Cardiac septum (tissue), 1 donor: ENCODE measurements at regions of chr17 and their contacts with region 1.

Region 1: GRCh38 chr17:2592971-2593820 is at the start of gene PAFAH1B1:
- DNase-seq: peak; percentile 97
- total RNA-seq, gene PAFAH1B1: 142 TPM

Region 2: DNA sequence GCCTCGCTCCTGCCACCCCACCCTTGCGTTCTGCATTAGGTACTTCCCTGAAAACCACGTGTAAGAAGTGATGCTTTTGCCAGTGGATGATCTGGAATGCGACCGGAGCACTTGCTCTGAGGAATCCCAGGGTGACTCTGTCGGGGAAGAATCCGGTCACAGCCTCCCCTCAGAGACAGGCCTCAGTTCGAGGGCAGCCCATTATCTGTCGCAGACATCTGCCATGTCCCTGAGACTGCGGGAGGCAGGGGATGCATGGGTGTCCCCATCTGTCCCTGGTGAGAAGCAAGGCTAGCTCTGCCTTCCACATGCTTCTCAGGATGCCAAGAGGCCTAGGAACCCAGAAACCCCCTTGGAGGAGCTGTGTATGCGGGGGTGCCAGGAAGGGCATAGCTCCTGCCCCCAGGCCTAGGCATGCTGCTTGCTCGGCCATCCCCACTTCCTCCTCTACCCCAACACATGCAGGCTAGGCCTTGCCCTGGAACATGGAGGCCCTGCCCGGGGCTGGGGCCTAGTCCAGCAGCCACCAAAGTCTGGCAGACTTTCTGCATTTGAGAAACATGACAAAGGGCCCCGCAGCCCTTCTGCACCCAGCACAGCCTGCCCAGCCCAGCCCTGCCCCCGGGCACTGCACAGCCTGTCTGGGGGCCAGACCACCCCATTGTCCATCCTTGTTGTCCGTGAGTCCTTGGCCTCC is 212.8 kb before region 1 on chr17:
- intact Hi-C with region 1: no loop called
- DNase-seq: no peak

Region 3: GRCh38 chr17:2392252-2393173 is 200.7 kb before region 1 on chr17:
- intact Hi-C with region 1: loop called (anchors 5 kb)
- DNase-seq: peak; percentile 98

Region 4: DNA sequence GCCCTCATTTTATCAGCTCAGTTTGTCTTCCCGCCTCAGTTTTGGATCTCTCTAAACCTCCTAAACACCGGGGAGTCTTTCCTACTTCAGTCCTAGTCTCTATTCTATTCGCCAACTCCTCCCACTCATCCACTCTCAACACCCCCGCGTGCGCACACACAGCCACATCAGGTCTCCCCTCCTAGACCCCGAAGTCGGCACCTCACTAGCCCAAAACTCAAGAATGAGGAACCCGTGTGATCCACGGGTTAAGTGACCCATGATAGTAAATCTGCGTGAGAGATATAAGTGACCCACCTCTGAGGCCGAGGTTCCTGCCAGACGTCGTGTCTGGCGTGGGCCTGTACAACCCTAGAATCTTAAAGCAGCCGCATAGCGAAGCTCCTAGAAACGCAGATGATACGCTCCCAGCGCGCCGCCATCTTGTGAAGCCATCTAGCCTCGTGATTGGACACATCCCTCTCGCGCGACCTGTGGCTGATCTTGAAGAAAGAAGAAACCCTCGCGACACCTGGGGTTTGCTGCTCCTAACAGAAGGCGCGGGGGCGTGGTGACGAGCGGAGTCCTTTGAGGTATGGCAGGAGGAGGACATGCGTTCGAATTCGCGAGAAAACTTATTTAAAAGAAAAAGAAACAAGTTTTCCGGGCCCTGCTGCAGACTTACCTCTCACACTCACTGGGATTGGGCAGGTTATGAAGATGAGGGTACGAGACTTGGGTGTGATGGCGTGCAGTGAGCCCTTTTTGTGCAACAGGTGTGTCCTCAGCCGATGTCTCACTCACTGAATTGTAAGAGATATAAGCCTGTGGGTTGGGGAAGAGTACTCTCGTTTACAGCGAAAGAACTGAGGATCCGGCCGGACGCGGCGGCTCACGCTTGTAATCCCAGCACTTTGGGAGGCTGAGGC is 81.5 kb before region 1 on chr17 and contains the start of gene METTL16:
- intact Hi-C with region 1: loop called (anchors 5 kb)
- DNase-seq: peak; percentile 98
- total RNA-seq, gene METTL16: 25.8 TPM

Region 5: DNA sequence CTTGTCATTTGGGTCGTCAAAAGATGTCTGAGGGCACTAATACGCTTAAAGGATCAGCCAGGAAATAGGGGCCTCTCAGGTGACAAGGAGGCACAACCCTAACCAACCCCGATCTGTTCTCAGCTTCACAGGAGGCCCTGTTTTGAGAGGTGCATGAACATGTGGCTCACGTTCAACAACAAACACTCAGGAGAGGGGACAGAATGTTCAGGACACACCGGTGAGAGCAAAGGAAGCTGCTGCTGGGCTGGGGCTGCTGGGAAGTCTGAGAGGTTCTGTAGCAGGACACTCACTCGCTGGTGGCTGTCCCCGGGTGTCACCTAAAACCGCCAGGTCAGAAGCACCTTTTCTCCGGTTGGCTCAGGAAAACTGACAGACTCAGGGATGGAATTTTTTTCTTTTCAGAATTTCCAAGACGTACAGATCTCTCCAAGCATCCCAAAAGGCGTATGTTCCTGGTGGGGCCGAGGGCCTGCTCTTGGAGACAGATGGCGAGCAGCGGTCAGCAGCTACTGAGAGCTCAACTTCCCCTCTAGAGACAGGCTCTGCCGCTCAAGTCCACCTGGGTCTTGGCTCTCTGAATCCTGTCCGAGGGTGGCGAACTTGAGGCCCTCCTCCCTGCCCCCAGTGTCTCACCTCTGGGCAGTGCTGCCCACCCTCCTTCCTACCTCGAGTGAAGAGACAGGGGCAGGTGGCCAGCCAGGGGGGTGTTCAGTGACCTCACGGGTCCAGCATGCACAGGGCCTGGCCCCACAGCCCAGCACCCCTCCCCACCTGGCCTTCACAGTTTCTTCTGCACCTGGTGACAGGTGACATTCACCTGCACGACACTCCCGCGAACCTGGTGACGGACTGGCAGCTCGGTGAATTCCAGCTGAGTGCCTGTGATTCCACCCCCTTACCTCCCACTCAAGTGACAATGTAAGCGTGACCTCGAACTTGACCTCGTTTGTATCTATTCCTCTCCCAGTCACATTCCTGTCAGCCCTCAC is 95.5 kb after region 1 on chr17:
- intact Hi-C with region 1: loop called (anchors 5 kb)
- DNase-seq: peak; percentile 62

Region 6: DNA sequence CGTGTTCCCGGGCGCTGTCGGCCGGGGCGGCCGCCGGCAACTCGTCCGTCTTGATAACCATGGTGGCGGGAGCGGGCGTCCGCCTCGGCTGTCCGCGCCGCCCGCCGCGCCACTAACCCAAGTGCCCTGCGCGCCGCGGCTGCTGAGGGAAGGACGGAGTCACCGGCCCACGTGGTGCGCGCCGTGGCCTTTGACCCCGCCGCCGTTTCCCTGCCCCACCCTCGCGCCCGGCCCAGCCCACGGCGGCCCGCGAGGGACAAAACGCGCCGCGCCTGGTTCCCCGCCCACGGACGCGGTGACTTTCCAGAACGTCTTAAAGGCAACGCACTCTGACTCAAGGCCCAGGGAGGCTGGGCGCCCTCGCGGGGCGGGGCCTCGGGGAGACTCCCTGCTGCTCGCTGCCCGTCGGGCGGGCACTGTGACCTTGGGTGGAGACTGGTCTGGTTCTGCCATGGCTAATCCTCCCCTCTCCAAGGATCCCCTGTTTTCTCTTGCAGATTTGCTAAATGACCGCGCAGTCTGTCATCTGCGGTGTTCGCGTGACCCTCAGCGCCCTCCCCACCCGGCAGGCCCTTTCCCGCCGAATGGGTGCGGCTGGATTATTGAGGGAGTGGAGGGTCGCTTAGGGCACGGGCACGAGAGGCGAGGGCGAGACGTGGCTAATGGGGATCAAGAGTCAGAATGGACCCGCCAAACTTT is 118.6 kb after region 1 on chr17 and contains the start of gene CLUH:
- intact Hi-C with region 1: loop called (anchors 2 kb)
- DNase-seq: peak; percentile 98
- total RNA-seq, gene CLUH: 143 TPM